ENCODE measurements at regions of chr5 and their contacts with region 1.

Region 1: DNA sequence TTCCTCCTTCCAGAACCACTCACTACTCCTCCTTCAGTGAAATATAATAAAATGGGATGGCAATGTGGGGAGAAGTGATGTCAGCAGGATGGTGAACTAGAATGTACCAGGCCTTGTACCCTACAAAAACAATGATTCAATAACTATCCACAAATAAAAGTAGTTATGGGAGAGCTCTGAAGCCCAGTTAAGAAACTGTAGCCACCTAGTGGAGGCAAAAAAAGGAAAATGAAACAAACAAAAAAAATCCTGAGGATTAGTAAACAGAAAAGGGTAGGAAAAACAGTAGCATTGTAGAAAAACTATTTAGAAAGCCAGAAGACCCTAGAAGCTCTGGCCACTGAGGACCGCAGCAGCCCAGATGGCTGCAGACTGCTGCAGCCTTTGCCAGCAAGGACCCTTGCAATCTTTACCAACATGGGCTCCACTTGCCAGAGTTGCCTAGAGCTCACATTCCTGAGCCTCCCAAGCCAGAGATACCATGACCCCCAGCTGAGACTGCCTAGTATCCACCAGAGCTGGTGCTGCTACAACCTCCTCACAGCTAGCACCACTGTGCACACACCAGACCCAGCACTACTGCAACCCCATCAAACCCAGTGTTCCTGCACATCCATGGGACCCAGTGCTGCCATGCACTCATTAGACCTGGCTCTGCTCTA is 259.7 kb upstream of the MSX2 start:
- DNase-seq: no peak

Region 2: DNA sequence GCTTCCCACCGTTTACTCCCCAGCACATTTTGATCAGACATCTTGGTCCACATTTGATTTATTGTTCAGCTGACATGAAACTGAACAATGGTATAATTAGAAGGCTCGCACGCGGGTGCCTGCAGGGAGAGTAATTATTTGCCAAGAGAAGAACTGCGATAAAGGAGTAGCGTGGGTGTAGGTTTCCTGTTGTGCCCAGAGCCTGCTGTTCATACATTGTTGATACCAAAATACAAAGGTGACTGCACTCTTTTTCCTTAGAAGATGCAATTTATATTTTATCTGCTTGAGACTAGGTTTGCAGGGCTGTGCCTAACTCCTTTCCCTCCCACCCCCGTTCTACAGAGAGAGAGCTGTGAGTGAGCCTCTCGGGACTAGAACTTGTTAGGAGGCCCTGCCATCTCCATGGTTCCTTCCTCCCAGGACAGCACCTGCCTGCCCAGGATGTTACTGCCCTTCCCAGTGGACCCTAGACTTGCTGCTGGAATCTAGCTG is 18.0 kb after region 1 on chr5:
- intact Hi-C with region 1: loop called in 1 of 2 experiments (anchors 1 kb)
- DNase-seq: no peak

Region 3: DNA sequence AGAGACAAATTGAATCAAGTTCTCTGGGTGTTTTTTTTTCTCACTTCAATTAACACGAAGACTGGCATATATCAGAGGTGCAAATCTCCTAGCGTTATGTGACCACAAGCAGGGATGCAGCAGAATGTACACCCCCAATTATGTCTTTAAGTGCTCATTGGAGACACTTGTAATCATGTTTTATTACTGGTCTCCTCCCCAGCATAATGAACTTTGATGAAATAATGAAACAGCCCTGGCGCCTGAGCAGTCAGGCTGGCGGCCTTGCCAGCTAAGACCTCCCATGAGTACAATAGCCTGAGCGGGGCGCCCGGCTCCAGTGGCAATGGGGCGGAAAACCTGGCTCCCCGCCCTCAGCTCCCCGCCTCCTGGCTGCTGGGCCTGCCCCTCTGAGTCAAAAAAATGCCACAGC is 50.4 kb after region 1 on chr5:
- intact Hi-C with region 1: loop called in 1 of 2 experiments (anchors 2 kb)
- DNase-seq: no peak